Naive thymus-derived CD4-positive, alpha-beta T cell (primary cell): ENCODE measurements at regions of chrX and their contacts with region 1.

Region 1: GRCh38 chrX:57573754-57574153 is 18.1 kb upstream of the ZXDB start:
- DNase-seq: peak in 1 of 9 donors; percentile 10
- ATAC-seq: peak; percentile 56
- H3K4me3 ChIP-seq: no peak overlapping the region
- H3K4me3 Mint-ChIP-seq: no peak overlapping the region
- H3K27ac ChIP-seq: no peak overlapping the region
- H3K27ac Mint-ChIP-seq: peak overlapping the region in 1 of 9 donors; percentile 26
- H3K4me1 ChIP-seq: no peaks in the 10 kb centered on the region
- H3K4me1 Mint-ChIP-seq: peaks cover 0 to 4% (median 0%) of the 10 kb centered on the region in 7 donors
- H3K27me3 ChIP-seq: no peaks in the 10 kb centered on the region
- H3K27me3 Mint-ChIP-seq: peaks cover 0 to 7% (median 0%) of the 10 kb centered on the region in 5 donors

Region 2: GRCh38 chrX:57417827-57418226 is 155.9 kb before region 1 on chrX:
- CTCF ChIA-PET with region 1: no interaction called
- POLR2A ChIA-PET with region 1: no interaction called
- intact Hi-C with region 1: no loop called
- DNase-seq: no peak
- ATAC-seq: no peak
- H3K4me3 ChIP-seq: no peak overlapping the region
- H3K4me3 Mint-ChIP-seq: no peak overlapping the region
- H3K27ac ChIP-seq: no peak overlapping the region
- H3K27ac Mint-ChIP-seq: no peak overlapping the region
- H3K4me1 ChIP-seq: no peaks in the 10 kb centered on the region
- H3K4me1 Mint-ChIP-seq: peaks cover 0 to 4% (median 0%) of the 10 kb centered on the region in 7 donors
- H3K27me3 ChIP-seq: no peaks in the 10 kb centered on the region
- H3K27me3 Mint-ChIP-seq: no peaks in the 10 kb centered on the region

Region 3: GRCh38 chrX:57918750-57919436 is 345.1 kb after region 1 on chrX:
- CTCF ChIA-PET with region 1: no interaction called
- POLR2A ChIA-PET with region 1: no interaction called
- intact Hi-C with region 1: loop called in 1 of 2 experiments (anchors 5 kb)
- DNase-seq: peak in 6 of 9 donors; percentile 13 to 37 (median 29)
- ATAC-seq: peak; percentile 54
- H3K4me3 ChIP-seq: no peak overlapping the region
- H3K4me3 Mint-ChIP-seq: no peak overlapping the region
- H3K27ac ChIP-seq: no peak overlapping the region
- H3K27ac Mint-ChIP-seq: peak overlapping the region in 1 of 9 donors; percentile 25
- H3K4me1 ChIP-seq: no peaks in the 10 kb centered on the region
- H3K4me1 Mint-ChIP-seq: no peaks in the 10 kb centered on the region
- H3K27me3 ChIP-seq: no peaks in the 10 kb centered on the region
- H3K27me3 Mint-ChIP-seq: no peaks in the 10 kb centered on the region

Region 4: GRCh38 chrX:57929373-57929772 is 355.6 kb after region 1 on chrX:
- CTCF ChIA-PET with region 1: no interaction called
- POLR2A ChIA-PET with region 1: no interaction called
- intact Hi-C with region 1: loop called in 1 of 2 experiments (anchors 5 kb)
- DNase-seq: peak in 2 of 9 donors; percentile 9 to 12
- ATAC-seq: no peak
- H3K4me3 ChIP-seq: no peak overlapping the region
- H3K4me3 Mint-ChIP-seq: no peak overlapping the region
- H3K27ac ChIP-seq: no peak overlapping the region
- H3K27ac Mint-ChIP-seq: no peak overlapping the region
- H3K4me1 ChIP-seq: no peaks in the 10 kb centered on the region
- H3K4me1 Mint-ChIP-seq: peaks cover 0 to 4% (median 0%) of the 10 kb centered on the region in 7 donors
- H3K27me3 ChIP-seq: no peaks in the 10 kb centered on the region
- H3K27me3 Mint-ChIP-seq: no peaks in the 10 kb centered on the region